BJ (cell line): ENCODE measurements at regions of chr11 and their contacts with region 1.

Region 1: DNA sequence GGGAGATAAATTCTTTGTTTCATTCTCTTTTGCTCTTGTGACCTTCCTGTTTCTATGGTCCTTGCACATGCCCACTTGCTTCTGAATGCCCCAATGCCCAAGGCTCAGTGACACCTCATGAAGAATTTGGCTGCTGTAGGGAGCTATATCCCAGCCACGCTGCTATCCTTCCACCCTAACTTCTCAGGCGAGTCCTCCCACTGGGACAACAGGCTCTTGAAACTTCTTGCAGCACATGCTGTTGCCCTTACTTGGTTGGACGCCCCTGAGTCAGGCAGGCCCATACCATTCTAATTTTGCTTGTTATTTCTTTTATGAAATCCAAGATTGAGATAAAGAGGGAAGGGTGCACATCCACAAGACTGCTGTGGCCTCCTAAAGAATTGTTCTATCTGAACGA is 57.6 kb upstream of the BLID start:
- DNase-seq: no peak
- H3K4me3 ChIP-seq: no peak overlapping the region
- H3K27me3 ChIP-seq: no peaks in the 10 kb centered on the region
- CTCF ChIP-seq: no peak

Region 2: GRCh38 chr11:122107566-122107965 is 66.0 kb before region 1 on chr11:
- CTCF ChIA-PET with region 1: interaction called, 10 read pairs
- POLR2A ChIA-PET with region 1: no interaction called
- DNase-seq: no peak
- H3K4me3 ChIP-seq: no peak overlapping the region
- H3K27me3 ChIP-seq: no peaks in the 10 kb centered on the region
- CTCF ChIP-seq: no peak

Region 3: GRCh38 chr11:122360875-122361274 is 187.3 kb after region 1 on chr11:
- CTCF ChIA-PET with region 1: no interaction called
- POLR2A ChIA-PET with region 1: no interaction called
- DNase-seq: no peak
- H3K4me3 ChIP-seq: no peak overlapping the region
- H3K27me3 ChIP-seq: no peaks in the 10 kb centered on the region
- CTCF ChIP-seq: no peak